Aorta (tissue), 5 donors: ENCODE measurements at regions of chr14 and their contacts with region 1.

Region 1: GRCh38 chr14:90409209-90409730 is 12.4 kb downstream of the CALM1 start:
- DNase-seq: peak; percentile 88 to 89
- ATAC-seq: peak; percentile 92
- H3K4me3 ChIP-seq: no peak overlapping the region
- H3K27ac ChIP-seq: peak overlapping the region; percentile 96 to 99
- H3K4me1 ChIP-seq: no peaks in the 10 kb centered on the region
- H3K27me3 ChIP-seq: no peaks in the 10 kb centered on the region

Region 2: GRCh38 chr14:90045616-90046015 is 363.7 kb before region 1 on chr14:
- intact Hi-C with region 1: no loop called
- DNase-seq: no peak
- ATAC-seq: no peak
- H3K4me3 ChIP-seq: no peak overlapping the region
- H3K27ac ChIP-seq: no peak overlapping the region
- H3K4me1 ChIP-seq: no peaks in the 10 kb centered on the region
- H3K27me3 ChIP-seq: no peaks in the 10 kb centered on the region

Region 3: DNA sequence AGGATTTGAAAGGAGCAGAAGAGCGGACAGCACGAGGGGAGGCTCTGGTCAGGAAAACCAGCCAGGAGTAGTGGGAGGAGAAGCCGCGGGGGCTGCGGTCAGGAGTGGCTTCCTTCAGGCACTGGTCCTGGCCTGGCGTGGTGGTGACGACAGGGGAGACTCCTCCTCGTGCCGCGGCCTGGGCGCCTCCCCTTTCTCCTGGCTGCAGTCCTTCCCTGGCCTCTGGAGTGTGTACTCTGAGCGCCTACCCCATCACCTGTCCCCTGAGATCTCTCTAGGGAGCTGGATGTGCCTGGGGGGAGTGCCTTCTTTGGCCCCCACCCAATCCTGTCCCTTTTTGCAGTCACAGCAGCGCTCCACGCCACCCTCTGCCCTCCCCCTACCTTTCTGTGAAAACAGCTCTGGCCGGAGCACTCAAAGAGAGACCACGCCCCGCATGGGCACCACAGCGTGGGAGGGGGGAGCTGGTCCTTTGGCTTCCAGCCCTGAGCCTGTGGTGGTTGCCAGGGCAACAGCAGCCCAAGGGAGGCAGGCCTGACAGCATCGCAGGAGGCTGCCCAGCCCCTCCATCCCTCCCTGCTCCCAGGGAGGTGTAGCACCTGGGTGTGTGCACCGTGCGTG is 113.4 kb after region 1 on chr14:
- intact Hi-C with region 1: loop called in 1 of 2 experiments (anchors 2 kb)
- DNase-seq: peak; percentile 85 to 92
- ATAC-seq: peak; percentile 81
- H3K4me3 ChIP-seq: no peak overlapping the region
- H3K27ac ChIP-seq: peak overlapping the region in 1 of 2 donors; percentile 74
- H3K4me1 ChIP-seq: no peaks in the 10 kb centered on the region
- H3K27me3 ChIP-seq: no peaks in the 10 kb centered on the region